MCF 10A (cell line): ENCODE measurements at regions of chr2 and their contacts with region 1.

Region 1: DNA sequence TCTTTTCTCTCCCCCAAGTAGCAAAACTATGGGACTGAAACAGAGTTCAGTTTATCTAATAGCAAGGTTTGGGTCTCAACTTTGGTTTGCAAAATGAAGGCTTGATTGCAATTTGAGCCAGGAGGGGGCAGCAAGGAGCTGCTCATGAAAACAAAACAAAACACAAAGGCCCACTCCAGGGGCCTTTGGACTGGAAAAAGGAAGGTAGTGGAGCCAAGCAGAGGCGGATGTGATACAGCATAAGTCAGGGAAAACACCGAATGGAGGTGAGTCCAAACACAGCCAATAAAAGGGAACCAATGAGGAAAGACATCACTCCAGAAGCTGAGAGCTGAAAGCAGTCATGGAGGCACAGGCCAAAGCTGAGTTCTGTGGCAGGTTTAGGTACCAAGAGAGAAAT is 799.7 kb upstream of the ACVR2A start:
- DNase-seq: peak; percentile 52
- H3K4me3 Mint-ChIP-seq: no peak overlapping the region
- H3K27ac Mint-ChIP-seq: no peak overlapping the region
- H3K4me1 Mint-ChIP-seq: peaks cover 6% of the 10 kb centered on the region
- H3K27me3 Mint-ChIP-seq: no peaks in the 10 kb centered on the region
- CTCF ChIP-seq: peak; percentile 51

Region 2: DNA sequence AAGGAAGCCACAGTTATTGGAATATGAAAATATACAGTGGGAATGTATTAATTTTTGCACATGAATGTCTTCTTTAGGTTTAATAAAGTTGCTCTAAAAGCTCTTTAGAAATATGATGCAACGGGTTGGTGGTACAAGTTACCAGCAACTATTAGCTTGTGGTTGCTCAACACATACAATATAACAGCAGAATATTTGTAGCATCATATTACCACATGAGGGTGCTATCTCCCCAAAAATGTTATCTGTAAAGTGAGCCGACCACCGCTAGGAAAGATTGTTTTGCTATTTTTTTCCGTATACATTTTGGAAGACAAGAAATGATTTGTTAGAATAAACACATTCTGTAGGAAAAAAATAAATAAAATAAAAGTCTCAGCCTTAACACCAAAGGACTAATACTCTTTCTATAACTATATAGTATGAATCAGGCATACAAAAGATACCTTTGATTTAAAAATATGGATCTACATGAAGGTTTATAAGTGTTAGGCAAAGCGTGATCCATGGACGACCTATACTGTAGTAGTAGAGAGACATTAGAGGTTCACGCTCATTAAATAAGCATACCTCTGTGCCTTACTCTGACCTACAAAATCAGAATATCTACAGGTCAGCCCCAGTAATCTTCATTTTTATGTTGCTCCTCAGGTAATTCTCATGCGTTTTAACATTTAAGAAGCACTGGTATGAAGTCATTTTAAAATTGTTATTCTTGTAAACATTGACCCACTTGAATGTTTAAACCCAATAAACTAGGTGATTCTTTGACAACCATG is 310.9 kb before region 1 on chr2:
- CTCF ChIA-PET with region 1: interaction called, 6 read pairs
- POLR2A ChIA-PET with region 1: no interaction called
- intact Hi-C with region 1: loop called (anchors 5 kb)
- DNase-seq: peak; percentile 77
- H3K4me3 Mint-ChIP-seq: no peak overlapping the region
- H3K27ac Mint-ChIP-seq: no peak overlapping the region
- H3K4me1 Mint-ChIP-seq: no peaks in the 10 kb centered on the region
- H3K27me3 Mint-ChIP-seq: no peaks in the 10 kb centered on the region
- CTCF ChIP-seq: peak; percentile 67

Region 3: GRCh38 chr2:146927080-146927711 is 117.9 kb before region 1 on chr2:
- CTCF ChIA-PET with region 1: interaction called, 13 read pairs
- POLR2A ChIA-PET with region 1: no interaction called
- intact Hi-C with region 1: loop called (anchors 2 kb)
- DNase-seq: peak; percentile 71
- H3K4me3 Mint-ChIP-seq: no peak overlapping the region
- H3K27ac Mint-ChIP-seq: no peak overlapping the region
- H3K4me1 Mint-ChIP-seq: peaks cover 5% of the 10 kb centered on the region
- H3K27me3 Mint-ChIP-seq: no peaks in the 10 kb centered on the region
- CTCF ChIP-seq: peak; percentile 53

Region 4: DNA sequence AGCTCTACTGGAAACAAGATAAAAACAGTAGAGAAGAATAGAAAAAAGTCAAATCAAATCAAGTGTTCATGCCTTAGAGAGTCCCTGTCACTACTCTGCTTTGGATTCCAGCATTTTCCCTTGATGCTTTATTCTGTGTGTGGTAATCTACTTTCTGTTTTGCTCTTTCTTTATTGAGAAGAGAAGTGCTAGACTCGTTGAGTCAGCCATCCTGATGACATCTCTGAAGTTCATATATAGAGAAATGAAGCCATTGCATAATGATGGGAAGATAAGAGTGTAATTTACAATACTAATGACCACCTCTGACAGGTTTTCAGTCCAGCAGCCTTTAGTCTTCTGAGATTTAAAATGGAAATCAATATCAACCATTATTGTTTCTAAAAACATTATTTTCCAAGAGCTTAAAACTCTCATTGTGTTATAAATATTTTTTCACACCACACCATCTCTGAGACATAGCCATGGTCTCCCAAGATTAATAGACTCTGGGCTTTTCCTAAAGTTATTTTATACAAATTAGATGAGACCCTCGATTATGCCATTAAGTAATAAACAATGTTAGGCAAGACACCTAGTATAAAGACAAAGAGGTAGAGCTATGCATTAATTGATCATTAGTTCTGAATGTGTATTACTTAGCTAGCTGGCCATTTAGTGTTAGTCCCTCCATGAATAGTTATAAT is 120.7 kb after region 1 on chr2:
- CTCF ChIA-PET with region 1: no interaction called
- POLR2A ChIA-PET with region 1: no interaction called
- intact Hi-C with region 1: no loop called
- DNase-seq: no peak
- H3K4me3 Mint-ChIP-seq: no peak overlapping the region
- H3K27ac Mint-ChIP-seq: no peak overlapping the region
- H3K4me1 Mint-ChIP-seq: peaks cover 14% of the 10 kb centered on the region
- H3K27me3 Mint-ChIP-seq: no peaks in the 10 kb centered on the region
- CTCF ChIP-seq: no peak

Region 5: DNA sequence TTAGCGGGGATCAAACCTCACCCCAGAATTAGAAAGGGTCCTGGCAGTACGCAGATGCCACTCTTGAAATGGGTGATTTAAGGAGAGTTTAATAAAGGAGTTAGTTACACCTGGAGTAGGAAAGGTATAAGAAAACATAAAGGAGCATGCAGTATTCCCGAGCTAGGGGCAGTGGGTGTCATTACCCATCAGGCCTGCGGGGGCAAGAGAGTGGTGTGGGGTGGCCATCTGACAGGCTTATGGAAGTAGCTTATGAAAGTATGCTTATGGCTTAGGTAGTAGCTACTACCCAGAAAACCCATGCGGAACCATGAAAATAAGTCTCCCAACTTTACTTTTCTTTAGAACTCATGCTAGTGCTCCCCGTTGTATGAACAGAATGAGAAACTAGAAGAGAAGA is 230.8 kb after region 1 on chr2:
- CTCF ChIA-PET with region 1: no interaction called
- POLR2A ChIA-PET with region 1: no interaction called
- intact Hi-C with region 1: no loop called
- DNase-seq: peak; percentile 14
- H3K4me3 Mint-ChIP-seq: no peak overlapping the region
- H3K27ac Mint-ChIP-seq: no peak overlapping the region
- H3K4me1 Mint-ChIP-seq: peaks cover 4% of the 10 kb centered on the region
- H3K27me3 Mint-ChIP-seq: no peaks in the 10 kb centered on the region
- CTCF ChIP-seq: no peak

Region 6: GRCh38 chr2:147331790-147332419 is 286.8 kb after region 1 on chr2:
- CTCF ChIA-PET with region 1: interaction called, 28 read pairs
- POLR2A ChIA-PET with region 1: interaction called, 3 read pairs
- intact Hi-C with region 1: loop called (anchors 1 kb)
- DNase-seq: peak; percentile 70
- H3K4me3 Mint-ChIP-seq: no peak overlapping the region
- H3K27ac Mint-ChIP-seq: no peak overlapping the region
- H3K4me1 Mint-ChIP-seq: no peaks in the 10 kb centered on the region
- H3K27me3 Mint-ChIP-seq: no peaks in the 10 kb centered on the region
- CTCF ChIP-seq: peak; percentile 72

Region 7: DNA sequence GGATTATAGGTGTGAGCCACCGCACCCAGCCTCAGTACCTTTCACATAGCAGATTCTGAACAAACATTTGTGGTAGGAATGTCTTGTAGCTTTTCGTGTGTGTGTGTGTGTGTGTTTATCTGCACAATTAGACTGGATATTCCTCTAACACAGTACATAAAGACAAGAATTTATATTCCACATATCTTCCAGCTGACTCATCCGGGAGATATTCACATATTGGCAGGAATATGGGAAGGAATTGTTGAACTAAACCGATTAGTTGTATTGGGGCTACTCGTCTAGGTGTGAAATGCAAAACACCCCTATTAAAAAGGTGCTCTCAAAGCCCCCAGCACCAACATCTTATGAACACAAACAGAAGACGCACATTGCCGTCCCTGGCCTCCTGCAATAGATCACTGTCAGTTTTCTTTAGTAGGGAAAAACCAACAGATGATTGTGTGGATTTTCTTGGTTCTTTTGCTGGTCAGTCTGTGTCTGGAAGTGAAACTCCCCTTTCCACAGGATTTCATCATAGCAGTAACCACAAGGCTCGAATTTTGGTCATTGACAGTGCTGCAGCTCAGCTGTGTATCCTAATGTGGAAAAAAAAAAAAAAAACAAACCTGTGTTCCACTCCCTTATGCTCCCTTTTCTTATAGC is 591.2 kb after region 1 on chr2:
- CTCF ChIA-PET with region 1: no interaction called
- POLR2A ChIA-PET with region 1: no interaction called
- intact Hi-C with region 1: no loop called
- DNase-seq: peak; percentile 49
- H3K4me3 Mint-ChIP-seq: peak overlapping the region; percentile 24
- H3K27ac Mint-ChIP-seq: no peak overlapping the region
- H3K4me1 Mint-ChIP-seq: peaks cover 13% of the 10 kb centered on the region
- H3K27me3 Mint-ChIP-seq: no peaks in the 10 kb centered on the region
- CTCF ChIP-seq: no peak